Activated CD4-positive, alpha-beta memory T cell treated with anti-CD3 and anti-CD28 coated beads for 36 hours (primary cell): ENCODE measurements at regions of chr10 and their contacts with region 1.

Region 1: DNA sequence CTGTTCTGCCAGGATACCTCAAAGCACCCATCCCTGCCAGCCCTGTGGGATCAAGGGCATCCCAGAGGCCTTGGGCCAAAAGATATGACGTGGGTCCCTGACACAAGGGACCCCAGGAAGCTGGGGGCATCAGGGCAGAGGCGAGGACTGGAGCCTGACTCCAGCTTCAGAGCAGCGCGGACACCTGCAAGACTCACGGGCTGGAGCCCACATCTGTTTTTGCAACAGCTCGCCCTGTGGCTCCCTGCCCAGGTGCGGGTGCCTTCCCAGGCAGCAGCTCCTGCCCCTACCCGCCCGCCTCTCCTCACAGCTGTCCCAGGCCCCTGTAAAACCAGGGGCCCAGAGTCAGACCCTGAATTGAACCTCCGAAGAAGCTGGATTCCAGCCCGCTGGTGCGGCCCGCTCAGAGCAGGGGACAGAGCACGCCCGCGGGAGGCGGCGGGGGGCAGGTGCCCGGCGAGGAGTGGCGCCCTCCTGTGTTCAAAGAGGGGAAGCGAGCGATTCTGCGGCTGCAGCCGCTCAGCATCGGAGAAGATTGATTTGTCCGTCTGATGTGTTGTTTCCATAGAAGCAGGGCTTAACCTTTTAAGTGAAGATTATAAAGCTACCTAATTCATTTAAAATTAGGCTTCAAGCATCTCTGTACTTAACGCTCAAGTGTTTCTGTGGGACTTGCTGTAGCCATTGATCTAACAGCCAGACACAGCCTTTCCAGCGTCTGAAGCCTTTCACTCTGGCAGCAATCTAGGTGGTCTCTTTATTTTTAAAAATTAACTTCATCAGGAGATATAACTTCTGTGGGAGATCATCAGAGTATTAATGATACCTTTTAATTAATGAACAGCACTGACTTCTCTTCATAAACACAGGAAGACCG is 88.4 kb downstream of the BEND7 start:
- DNase-seq: peak; percentile 76
- H3K4me3 Mint-ChIP-seq: peak overlapping the region; percentile 38
- H3K27ac Mint-ChIP-seq: no peak overlapping the region
- H3K4me1 Mint-ChIP-seq: peaks cover 9% of the 10 kb centered on the region
- H3K27me3 Mint-ChIP-seq: peaks cover 37% of the 10 kb centered on the region

Region 2: GRCh38 chr10:12975266-12975665 is 465.2 kb before region 1 on chr10:
- CTCF ChIA-PET with region 1: no interaction called
- POLR2A ChIA-PET with region 1: no interaction called
- intact Hi-C with region 1: no loop called
- DNase-seq: no peak
- H3K4me3 Mint-ChIP-seq: no peak overlapping the region
- H3K27ac Mint-ChIP-seq: no peak overlapping the region
- H3K4me1 Mint-ChIP-seq: no peaks in the 10 kb centered on the region
- H3K27me3 Mint-ChIP-seq: peaks cover 32% of the 10 kb centered on the region

Region 3: GRCh38 chr10:13160934-13161856 is 279.2 kb before region 1 on chr10 and contains the start of gene MCM10:
- CTCF ChIA-PET with region 1: interaction called, 8 read pairs
- POLR2A ChIA-PET with region 1: no interaction called
- intact Hi-C with region 1: loop called (anchors 1 kb)
- DNase-seq: peak; percentile 99
- H3K4me3 Mint-ChIP-seq: peak within 1 kb of the TSS; percentile 85
- H3K27ac Mint-ChIP-seq: peak within 1 kb of the TSS; percentile 34
- H3K4me1 Mint-ChIP-seq: peaks cover 28% of the 10 kb centered on the region
- H3K27me3 Mint-ChIP-seq: no peaks in the 10 kb centered on the region
- total RNA-seq, gene MCM10: 70.6 to 74.2 TPM

Region 4: GRCh38 chr10:13271552-13272163 is 168.8 kb before region 1 on chr10:
- CTCF ChIA-PET with region 1: no interaction called
- POLR2A ChIA-PET with region 1: no interaction called
- intact Hi-C with region 1: no loop called
- DNase-seq: peak; percentile 71
- H3K4me3 Mint-ChIP-seq: no peak overlapping the region
- H3K27ac Mint-ChIP-seq: no peak overlapping the region
- H3K4me1 Mint-ChIP-seq: peaks cover 7% of the 10 kb centered on the region
- H3K27me3 Mint-ChIP-seq: no peaks in the 10 kb centered on the region

Region 5: GRCh38 chr10:13348216-13349017 is 92.0 kb before region 1 on chr10 and contains the start of gene SEPHS1:
- CTCF ChIA-PET with region 1: interaction called, 10 read pairs
- POLR2A ChIA-PET with region 1: no interaction called
- intact Hi-C with region 1: no loop called
- DNase-seq: peak; percentile 91
- H3K4me3 Mint-ChIP-seq: peak within 1 kb of the TSS; percentile 94
- H3K27ac Mint-ChIP-seq: peak within 1 kb of the TSS; percentile 93
- H3K4me1 Mint-ChIP-seq: peaks cover 51% of the 10 kb centered on the region
- H3K27me3 Mint-ChIP-seq: no peaks in the 10 kb centered on the region
- total RNA-seq, gene SEPHS1: 57.2 to 57.6 TPM

Region 6: DNA sequence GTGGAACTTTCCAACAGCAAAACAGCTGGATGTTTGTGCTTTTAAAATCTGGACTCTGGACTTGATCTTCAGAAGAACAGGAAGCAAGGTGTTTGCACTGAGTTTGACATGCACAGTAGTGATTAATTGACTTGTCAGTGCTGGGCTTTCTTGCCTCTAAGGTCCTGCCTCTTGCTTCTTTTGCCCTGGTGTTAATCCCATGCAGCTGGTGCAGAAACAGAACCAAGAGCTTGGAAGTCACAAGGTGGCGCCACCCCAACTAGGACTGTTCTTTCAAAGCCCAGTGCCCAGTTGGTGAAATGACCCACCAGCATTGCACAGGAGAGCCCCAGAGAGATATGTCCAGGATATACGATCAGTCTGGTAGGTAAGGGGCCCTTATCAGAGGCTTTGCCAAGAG is 25.5 kb before region 1 on chr10:
- CTCF ChIA-PET with region 1: interaction called, 15 read pairs
- POLR2A ChIA-PET with region 1: no interaction called
- intact Hi-C with region 1: no loop called
- DNase-seq: no peak
- H3K4me3 Mint-ChIP-seq: no peak overlapping the region
- H3K27ac Mint-ChIP-seq: no peak overlapping the region
- H3K4me1 Mint-ChIP-seq: no peaks in the 10 kb centered on the region
- H3K27me3 Mint-ChIP-seq: peaks cover 5% of the 10 kb centered on the region

Region 7: DNA sequence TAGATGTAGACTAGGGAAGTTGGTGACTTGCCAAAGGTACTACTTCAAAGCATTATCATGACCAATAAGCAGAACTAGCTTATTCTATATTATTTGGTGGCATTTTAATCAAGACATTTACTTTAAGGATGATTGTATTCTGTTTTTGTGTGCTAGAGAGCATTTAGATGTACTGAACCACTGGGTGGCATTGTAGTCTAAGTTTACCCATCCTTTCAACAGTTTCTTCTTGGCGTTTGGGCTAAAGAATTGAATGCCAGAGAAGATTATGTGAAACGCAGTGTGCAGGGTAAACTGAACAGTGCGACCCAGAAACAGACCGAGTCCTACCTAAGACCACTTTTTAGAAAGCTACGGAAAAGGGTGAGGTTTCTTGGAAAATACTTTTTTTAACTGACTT is 173.1 kb after region 1 on chr10:
- CTCF ChIA-PET with region 1: no interaction called
- POLR2A ChIA-PET with region 1: no interaction called
- intact Hi-C with region 1: no loop called
- DNase-seq: no peak
- H3K4me3 Mint-ChIP-seq: no peak overlapping the region
- H3K27ac Mint-ChIP-seq: no peak overlapping the region
- H3K4me1 Mint-ChIP-seq: no peaks in the 10 kb centered on the region
- H3K27me3 Mint-ChIP-seq: no peaks in the 10 kb centered on the region

Region 8: DNA sequence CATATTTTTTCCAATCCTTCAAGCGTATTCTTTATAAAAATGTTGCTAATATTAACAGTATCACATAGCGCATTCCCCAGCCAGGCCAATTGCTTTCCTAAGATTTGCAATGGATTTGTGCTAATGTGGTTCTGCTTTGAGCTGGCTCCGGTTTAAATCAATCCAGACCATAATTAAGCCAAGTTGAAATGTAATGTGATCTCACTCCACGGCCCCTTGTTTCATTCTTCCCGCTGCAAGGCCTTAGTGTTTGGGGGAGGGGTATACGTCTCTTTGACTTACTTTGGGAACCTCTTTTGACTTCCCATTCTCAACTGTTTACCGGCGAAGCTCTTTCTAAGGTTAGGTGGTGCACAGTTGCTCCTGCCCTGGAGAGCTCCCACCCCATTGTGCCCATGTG is 232.7 kb after region 1 on chr10:
- CTCF ChIA-PET with region 1: no interaction called
- POLR2A ChIA-PET with region 1: no interaction called
- intact Hi-C with region 1: no loop called
- DNase-seq: no peak
- H3K4me3 Mint-ChIP-seq: no peak overlapping the region
- H3K27ac Mint-ChIP-seq: no peak overlapping the region
- H3K4me1 Mint-ChIP-seq: no peaks in the 10 kb centered on the region
- H3K27me3 Mint-ChIP-seq: peaks cover 8% of the 10 kb centered on the region